ENCODE measurements at regions of chr22 and their contacts with region 1.

Region 1: DNA sequence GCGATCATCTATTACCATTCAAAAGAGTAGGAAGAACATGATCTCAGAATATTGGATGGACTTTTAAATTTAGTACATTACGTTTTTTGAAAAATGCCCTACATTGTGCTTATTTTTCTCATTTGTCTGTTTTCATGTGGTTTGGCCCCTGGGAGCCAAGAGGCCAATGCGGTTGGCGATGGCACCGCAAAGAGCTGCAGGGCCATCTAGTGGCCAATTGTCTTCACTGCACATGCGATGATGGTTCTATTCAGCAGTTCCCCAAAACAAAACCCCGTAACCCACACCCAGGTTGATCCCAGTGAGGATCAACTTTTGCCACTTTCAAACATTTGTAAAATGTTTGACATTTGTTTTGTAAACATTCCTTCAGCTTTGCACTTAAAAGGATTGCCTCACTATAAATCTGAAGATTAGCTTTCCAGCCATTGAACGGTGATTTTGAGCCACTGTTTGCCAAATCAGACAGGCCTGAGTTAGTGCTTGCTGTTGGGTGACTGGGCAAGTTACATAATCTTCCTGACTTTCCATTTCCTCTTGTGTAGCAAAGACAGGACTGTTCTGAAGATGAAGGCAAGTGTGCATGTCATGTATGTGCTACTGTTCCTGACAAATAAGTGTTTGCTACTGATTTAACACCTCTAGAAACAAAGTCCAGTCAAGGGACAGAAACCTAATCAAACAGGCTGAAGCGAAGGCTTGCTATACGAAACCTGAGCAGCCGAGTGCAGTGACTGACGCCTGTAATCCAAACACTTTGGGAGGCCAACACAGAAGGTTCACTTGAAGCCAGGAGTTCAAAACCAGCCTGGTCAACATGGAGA is 29.2 kb upstream of the XBP1 start:
- DNase-seq: peak; percentile 19
- H3K4me3 ChIP-seq: no peak overlapping the region
- H3K27ac ChIP-seq: no peak overlapping the region
- H3K4me1 ChIP-seq: no peaks in the 10 kb centered on the region
- H3K27me3 ChIP-seq: no peaks in the 10 kb centered on the region
- CTCF ChIP-seq: peak; percentile 94 to 96 (median 96)

Region 2: GRCh38 chr22:28768701-28769393 is 60.7 kb before region 1 on chr22:
- dilution Hi-C with region 1: no loop called
- DNase-seq: no peak
- H3K4me3 ChIP-seq: no peak overlapping the region
- H3K27ac ChIP-seq: no peak overlapping the region
- H3K4me1 ChIP-seq: peaks cover 15% of the 10 kb centered on the region
- H3K27me3 ChIP-seq: no peaks in the 10 kb centered on the region
- CTCF ChIP-seq: no peak

Region 3: DNA sequence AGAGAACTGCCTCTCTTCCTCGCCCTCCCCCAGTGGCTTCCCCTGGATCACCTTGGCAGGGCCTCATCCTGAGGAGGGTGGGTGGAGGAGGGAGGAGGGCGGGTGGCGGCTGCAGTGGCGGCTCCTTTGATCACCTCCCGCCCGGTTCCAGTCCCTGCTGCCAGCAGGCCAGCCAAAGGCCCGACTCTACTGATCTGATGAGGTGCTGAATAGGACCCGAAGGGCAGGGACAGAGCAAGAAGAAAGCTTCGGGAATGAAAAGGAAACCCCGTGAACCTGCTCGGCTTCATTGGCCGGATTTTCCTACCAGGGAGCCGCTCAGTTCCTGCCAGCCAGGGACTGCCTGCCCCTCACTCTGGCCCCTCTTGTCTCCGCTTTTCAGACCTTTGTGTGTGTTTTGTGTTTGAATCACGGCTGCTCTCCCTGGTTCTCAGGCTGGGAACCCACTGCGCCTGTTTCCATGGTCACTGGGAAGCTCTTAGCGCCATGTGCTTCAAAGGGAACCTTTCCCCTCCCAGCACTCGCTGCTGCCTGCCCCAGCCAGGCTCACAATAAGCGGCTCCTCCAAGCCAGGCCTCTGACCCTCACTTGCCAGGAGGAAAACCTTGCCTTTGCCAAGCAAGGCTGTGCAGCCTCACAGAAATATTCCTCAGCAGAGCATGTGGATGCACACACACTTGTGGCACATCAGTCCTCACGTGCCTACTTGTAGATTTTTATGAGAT is 175.2 kb after region 1 on chr22:
- dilution Hi-C with region 1: loop called (anchors 10 kb)
- DNase-seq: no peak
- H3K4me3 ChIP-seq: no peak overlapping the region
- H3K27ac ChIP-seq: no peak overlapping the region
- H3K4me1 ChIP-seq: peaks cover 7% of the 10 kb centered on the region
- H3K27me3 ChIP-seq: no peaks in the 10 kb centered on the region
- CTCF ChIP-seq: no peak

Measured in keratinocyte (primary cell).